ENCODE measurements at regions of chr3 and their contacts with region 1.

Region 1: DNA sequence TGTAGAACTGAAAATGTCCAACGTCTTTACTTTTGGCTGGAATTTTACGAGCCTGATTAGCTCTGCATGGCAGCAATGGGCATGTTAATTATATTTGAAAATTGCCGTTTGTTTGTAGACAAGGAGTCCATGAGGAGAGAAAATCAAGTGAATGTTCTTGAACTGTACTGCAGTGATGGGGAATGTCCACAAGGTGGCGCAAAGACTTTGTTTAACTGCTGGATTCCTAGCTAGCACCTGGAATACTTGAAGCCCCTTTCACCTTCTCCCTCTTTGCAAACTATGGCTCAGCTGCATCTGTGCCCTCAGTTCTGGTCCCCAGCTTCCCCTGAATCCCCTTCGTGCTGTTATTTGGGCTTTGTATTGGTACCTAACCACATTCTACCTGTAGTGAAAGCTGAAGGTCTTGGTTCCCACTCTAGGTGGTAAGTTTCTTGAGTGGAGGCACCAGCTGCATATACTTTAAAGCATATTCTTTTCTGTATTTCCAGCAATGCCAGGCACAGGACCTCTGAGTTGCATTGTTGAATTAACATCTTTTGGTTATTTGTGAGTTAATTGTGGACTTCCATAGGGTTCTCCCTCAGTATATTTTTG is 25.3 kb downstream of the EXOG start:
- DNase-seq: no peak
- H3K4me3 ChIP-seq: no peak overlapping the region
- CTCF ChIP-seq: peak; percentile 83

Region 2: DNA sequence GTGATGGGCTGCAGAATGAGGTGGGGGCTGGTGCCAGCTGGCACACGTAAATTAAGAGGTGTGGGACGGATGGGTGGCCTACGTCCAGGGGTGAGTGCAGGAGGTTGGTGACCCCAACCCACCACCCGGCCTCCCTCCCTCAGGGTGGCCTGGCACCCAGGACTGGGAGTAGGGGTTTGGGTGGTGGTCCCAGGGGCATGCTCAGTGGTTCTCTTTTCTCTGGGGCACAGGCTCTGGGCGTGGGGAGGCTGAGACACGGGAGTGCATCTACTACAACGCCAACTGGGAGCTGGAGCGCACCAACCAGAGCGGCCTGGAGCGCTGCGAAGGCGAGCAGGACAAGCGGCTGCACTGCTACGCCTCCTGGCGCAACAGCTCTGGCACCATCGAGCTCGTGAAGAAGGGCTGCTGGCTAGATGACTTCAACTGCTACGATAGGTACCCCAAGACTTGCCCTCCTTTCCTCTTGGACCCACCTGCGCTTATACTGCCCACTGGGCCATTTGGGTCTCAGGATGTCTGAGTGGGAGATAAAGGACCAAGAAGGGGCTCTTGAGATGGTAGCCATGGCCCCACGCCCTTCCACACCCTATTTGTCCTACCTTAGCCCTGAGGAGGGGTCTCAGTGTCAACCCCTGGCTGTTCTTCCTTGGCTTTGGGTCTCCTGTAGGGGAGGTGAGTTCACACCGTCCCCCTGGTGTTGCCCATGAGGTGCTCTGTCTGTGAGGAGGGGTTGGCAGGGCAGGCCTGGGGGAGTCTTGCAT is 44.2 kb before region 1 on chr3:
- CTCF ChIA-PET with region 1: no interaction called
- POLR2A ChIA-PET with region 1: no interaction called
- DNase-seq: no peak
- H3K4me3 ChIP-seq: no peak overlapping the region
- CTCF ChIP-seq: no peak

Region 3: GRCh38 chr3:38507120-38507519 is 14.4 kb before region 1 on chr3:
- CTCF ChIA-PET with region 1: interaction called, 119 read pairs
- POLR2A ChIA-PET with region 1: no interaction called
- DNase-seq: no peak
- H3K4me3 ChIP-seq: no peak overlapping the region
- CTCF ChIP-seq: no peak

Region 4: GRCh38 chr3:38651154-38651789 is 129.8 kb after region 1 on chr3:
- CTCF ChIA-PET with region 1: interaction called, 334 read pairs
- POLR2A ChIA-PET with region 1: no interaction called
- DNase-seq: no peak
- H3K4me3 ChIP-seq: no peak overlapping the region
- CTCF ChIP-seq: peak; percentile 96

Region 5: DNA sequence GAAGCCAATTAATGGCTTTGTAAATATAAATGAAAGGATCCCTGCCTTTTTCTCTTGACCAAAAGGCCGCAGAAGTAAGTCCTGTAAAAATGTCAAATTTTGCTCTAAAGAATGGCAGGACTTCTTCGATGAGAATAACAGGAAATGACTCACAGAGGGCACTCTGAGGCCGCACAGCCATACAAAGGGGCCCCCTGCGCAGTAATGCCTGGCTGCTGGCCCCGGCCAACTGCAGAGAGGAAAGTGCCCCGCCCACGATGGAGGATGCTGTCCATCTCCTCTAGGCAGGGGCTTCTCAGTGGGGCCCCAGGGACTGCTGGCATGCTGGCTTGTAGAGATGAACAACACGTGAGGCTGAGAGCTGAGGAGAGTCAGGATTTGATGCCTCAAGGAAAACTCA is 312.6 kb after region 1 on chr3:
- CTCF ChIA-PET with region 1: interaction called, 12 read pairs
- POLR2A ChIA-PET with region 1: no interaction called
- DNase-seq: peak; percentile 26
- H3K4me3 ChIP-seq: no peak overlapping the region
- CTCF ChIP-seq: no peak

Region 6: GRCh38 chr3:39000008-39000450 is 478.5 kb after region 1 on chr3:
- CTCF ChIA-PET with region 1: interaction called, 23 read pairs
- POLR2A ChIA-PET with region 1: no interaction called
- DNase-seq: peak; percentile 24
- H3K4me3 ChIP-seq: no peak overlapping the region
- CTCF ChIP-seq: peak; percentile 77

Measured in AG04449 (cell line).